PC-3 (cell line): ENCODE measurements at regions of chr19 and their contacts with region 1.

Region 1: DNA sequence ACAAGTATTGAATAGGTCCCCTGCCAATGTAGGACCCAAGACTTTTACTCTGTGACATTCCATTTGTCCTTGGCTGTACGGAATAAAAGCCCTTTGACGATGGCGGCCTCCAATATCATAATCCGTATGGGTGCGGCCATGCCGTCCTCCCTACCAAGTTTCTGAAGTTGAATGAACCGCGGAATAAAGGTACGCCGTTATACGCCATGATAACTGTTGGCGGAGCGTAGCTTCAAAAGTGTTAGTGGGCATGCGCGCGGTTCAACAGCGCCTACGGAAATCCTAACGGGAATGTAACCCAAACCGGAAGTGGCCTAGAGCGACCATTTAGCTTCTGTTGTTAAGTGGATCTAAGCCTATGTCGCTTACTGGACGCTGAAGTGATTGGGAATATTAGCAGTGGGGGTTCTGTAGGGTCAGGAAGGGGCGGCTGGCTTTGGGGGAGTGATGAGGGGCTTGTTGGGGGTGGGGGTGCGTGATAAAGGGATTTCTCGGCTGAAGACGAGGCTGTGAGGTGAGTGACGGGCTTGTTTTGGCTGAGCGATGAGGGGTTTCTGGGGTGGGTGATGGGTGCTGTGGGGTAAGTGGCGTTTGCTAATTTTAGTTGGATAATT is at the start of gene ZNF175:
- DNase-seq: peak; percentile 100
- ATAC-seq: peak; percentile 65
- H3K4me3 ChIP-seq: peak within 1 kb of the TSS; percentile 81
- H3K27ac ChIP-seq: peak within 1 kb of the TSS; percentile 75
- H3K4me1 ChIP-seq: peaks cover 71% of the 10 kb centered on the region
- H3K27me3 ChIP-seq: no peaks in the 10 kb centered on the region
- CTCF ChIP-seq: no peak
- total RNA-seq, gene ZNF175: 7.5 and 8.5 TPM in 2 replicates

Region 2: DNA sequence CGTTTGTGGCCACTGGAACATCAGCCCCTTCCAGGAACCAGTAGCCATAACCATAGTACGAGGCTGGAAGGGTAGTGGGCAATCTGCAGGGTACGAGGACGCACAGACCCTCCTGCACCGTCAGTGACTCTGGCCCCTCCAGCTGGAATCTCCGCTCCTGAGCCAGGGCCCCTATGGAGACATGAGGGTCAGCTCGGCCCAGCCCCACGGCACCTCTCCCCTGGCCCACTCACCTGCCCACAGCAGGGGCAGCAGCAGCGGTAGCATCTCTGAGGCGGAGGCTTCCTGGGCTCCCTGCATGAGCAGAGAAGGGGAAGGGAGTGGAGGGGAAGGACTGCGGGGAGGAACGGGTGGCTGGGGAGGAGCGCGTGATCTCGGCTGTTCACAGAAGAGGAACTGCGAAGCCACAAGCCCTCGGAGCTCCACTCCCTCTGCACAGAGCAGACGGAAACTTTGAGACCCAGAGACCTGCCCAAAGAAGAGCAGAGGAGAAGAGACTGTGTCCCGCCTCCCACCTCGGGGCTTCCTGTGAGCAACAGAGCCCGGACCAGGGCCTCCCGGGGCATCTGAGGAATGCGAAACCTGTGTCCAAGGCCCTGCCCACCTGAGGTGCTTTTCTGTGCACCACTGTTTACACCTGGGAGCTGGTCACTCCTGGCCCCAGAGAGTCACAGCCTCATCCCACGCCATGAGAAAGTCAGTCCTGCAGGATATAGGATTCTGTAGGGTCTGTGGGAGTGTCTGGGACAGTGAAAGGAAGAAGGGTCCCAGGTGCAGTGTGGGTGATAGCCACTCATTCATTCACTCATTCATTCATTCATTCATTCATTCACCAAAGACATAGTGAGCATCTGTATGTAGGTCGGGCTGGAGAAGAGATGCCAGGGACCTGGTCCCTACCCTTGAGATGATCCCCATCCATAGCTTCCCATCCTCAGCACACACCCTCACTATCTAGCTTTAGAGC is 39.4 kb before region 1 on chr19 and contains the start of gene SIGLEC6:
- CTCF ChIA-PET with region 1: no interaction called
- POLR2A ChIA-PET with region 1: no interaction called
- intact Hi-C with region 1: no loop called
- DNase-seq: no peak
- ATAC-seq: no peak
- H3K4me3 ChIP-seq: no peak within 1 kb of the TSS
- H3K27ac ChIP-seq: no peak within 1 kb of the TSS
- H3K4me1 ChIP-seq: no peaks in the 10 kb centered on the region
- H3K27me3 ChIP-seq: peaks cover 100% of the 10 kb centered on the region
- CTCF ChIP-seq: no peak
- total RNA-seq, gene SIGLEC6: not detected in 2 replicates

Region 3: DNA sequence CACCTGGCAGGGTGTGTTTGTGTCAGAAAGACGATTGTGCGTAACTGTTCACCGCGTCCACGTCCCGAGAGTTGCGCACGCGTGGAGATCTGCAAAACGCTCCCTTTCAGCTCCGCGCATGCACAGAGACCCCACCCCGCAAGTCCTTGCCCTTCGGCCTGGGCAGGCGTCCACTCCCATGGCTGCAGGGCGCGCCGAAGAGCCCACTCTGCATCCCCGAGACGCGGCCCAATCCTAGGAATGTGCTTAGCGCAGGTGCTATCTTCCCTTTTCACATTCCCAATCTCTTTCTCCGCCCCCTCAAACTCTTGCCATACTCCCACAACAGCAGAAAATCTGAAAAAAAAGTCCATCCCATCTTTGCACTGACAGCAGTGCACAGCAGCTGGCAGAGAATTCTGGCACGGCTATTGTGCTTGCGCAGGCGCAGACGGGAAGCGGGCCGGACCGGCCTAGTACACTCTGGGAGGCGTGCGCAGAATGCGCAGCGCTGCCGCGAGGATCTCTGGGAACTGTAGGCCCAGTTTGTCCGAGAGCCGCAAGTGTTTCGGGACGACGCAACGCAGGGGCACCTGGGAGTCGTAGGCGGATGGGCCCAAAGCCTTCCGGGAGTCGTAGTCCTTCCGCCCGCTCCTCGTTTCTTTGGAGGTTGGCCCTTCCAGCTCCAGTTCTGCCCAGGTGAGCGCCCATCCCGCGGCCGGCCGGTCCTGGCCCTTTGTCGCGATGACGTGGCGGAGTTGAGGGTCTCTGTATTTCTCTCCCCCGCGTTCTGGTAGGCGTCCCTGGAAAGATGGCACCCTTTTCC is 23.1 kb after region 1 on chr19:
- CTCF ChIA-PET with region 1: interaction called, 3 read pairs
- POLR2A ChIA-PET with region 1: no interaction called
- intact Hi-C with region 1: loop called (anchors 1 kb)
- DNase-seq: peak; percentile 99
- ATAC-seq: peak; percentile 99
- H3K4me3 ChIP-seq: peak overlapping the region; percentile 76
- H3K27ac ChIP-seq: no peak overlapping the region; the same call in 1 of the 2 replicates
- H3K4me1 ChIP-seq: peaks cover 14% of the 10 kb centered on the region
- H3K27me3 ChIP-seq: no peaks in the 10 kb centered on the region
- CTCF ChIP-seq: no peak

Region 4: DNA sequence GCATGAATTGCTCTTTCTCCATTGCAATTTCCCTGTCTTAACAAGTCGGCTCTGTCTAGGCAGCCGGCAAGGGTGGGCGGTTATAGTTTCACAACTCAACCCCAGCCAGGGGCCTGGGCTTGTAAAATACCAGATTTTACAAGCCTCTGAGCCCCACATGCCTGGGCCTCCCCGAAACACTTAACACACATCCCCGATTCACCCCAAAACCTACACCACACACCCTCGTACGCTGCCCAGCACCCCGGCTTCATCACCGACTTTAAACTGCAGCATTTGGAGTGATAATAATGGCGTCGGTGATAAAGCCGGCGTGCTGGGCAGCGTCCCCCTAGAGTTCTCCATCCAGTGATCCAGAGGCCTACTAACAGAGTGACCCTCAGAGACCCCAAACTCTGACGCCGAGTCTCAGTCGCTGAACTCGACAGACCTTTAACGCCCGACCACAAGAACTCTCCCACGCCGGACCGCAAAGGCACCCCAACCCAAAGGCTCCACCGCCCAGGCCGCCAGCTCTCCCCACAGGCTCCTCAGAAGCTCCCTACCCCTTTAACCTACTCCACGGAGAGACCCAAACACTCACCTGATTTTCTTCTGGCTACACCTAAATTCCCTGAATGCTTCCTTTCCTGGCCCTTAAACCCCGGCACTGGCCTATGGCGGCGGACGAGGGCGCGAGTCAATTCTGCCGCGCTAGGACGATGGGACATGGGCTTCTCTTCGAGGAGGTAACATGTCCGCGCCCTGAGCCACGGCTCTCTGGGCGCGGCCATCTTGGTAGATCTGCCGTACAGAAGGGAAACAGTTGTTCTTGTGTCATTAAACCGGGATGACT is 333.5 kb after region 1 on chr19 and contains the start of gene ZNF649:
- CTCF ChIA-PET with region 1: no interaction called
- POLR2A ChIA-PET with region 1: no interaction called
- intact Hi-C with region 1: no loop called
- DNase-seq: peak; percentile 92
- ATAC-seq: peak; percentile 98
- H3K4me3 ChIP-seq: peak within 1 kb of the TSS; percentile 77
- H3K27ac ChIP-seq: no peak within 1 kb of the TSS
- H3K4me1 ChIP-seq: no peaks in the 10 kb centered on the region
- H3K27me3 ChIP-seq: no peaks in the 10 kb centered on the region
- CTCF ChIP-seq: peak; percentile 35; the same call in 1 of the 2 replicates
- total RNA-seq, gene ZNF649: 4.7 and 9.7 TPM in 2 replicates